Activated naive CD4-positive, alpha-beta T cell treated with anti-CD3 and anti-CD28 coated beads for 36 hours (primary cell): ENCODE measurements at regions of chr14 and their contacts with region 1.

Region 1: GRCh38 chr14:53152890-53153701 is at the start of gene DDHD1:
- DNase-seq: peak; percentile 82
- H3K4me3 Mint-ChIP-seq: peak within 1 kb of the TSS; percentile 100
- H3K27ac Mint-ChIP-seq: peak within 1 kb of the TSS; percentile 95
- H3K4me1 Mint-ChIP-seq: peaks cover 36% of the 10 kb centered on the region
- H3K27me3 Mint-ChIP-seq: no peaks in the 10 kb centered on the region
- total RNA-seq, gene DDHD1: 20.1 to 20.4 TPM

Region 2: DNA sequence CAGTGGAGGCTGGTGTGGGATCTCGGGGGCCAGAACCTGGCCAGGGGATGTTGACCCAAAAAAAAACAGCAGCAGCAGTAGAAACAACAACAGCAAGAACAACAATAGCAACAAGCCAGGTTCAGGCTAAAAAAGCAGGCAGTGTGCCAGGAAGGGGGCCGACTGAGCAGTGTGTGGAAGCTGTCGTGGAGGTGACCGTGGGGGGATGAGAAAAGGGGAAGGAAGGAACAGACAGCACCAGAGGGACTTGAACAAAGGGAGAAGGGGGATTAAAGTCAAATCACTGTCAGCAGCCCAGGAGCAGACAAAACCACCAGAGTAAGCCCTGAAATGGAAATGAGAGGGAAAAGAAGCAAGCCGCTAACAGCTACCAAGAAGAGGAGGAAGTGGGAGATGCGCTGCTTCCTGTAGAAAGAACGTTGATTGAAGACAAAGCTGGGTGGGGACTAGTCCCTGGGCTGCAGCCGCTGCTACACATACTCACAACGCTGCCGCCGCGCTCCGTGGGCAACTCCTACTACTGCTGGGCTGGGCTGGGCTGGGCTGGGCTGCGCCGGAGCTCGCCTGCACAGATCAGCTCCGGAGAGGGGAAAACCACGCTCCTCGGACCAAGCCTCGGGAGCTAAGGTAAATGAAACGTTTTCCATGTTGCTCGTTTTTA is 1292.8 kb before region 1 on chr14 and contains the start of gene GNG2:
- CTCF ChIA-PET with region 1: no interaction called
- intact Hi-C with region 1: loop called (anchors 5 kb)
- DNase-seq: peak; percentile 91
- H3K4me3 Mint-ChIP-seq: peak within 1 kb of the TSS; percentile 96
- H3K27ac Mint-ChIP-seq: peak within 1 kb of the TSS; percentile 94
- H3K4me1 Mint-ChIP-seq: peaks cover 51% of the 10 kb centered on the region
- H3K27me3 Mint-ChIP-seq: no peaks in the 10 kb centered on the region
- total RNA-seq, gene GNG2: 176 to 181 TPM

Region 3: GRCh38 chr14:52259434-52259833 is 893.7 kb before region 1 on chr14:
- CTCF ChIA-PET with region 1: no interaction called
- intact Hi-C with region 1: no loop called
- DNase-seq: no peak
- H3K4me3 Mint-ChIP-seq: no peak overlapping the region
- H3K27ac Mint-ChIP-seq: no peak overlapping the region
- H3K4me1 Mint-ChIP-seq: peaks cover 1% of the 10 kb centered on the region
- H3K27me3 Mint-ChIP-seq: peaks cover 2% of the 10 kb centered on the region

Region 4: DNA sequence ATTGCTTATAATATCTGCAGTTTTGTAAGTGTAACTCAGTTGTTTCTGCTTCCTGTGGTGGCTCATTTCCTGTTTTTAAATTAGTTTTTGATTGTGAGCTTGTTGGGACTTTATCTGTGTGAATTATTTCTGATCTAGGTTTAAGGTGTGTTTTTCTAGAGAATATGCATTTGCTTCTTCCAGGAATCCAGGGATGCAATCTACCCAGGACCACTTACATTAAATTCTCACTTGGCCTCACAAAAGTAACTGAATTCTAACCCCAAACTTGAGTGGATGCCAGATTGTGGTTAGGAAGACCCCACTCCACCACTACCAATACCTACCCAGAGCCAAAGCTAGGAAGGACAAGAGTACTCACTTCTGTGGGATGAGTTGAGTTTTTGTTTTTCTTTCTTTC is 411.2 kb before region 1 on chr14:
- CTCF ChIA-PET with region 1: no interaction called
- intact Hi-C with region 1: loop called (anchors 1 kb)
- DNase-seq: no peak
- H3K4me3 Mint-ChIP-seq: peak overlapping the region; percentile 68
- H3K27ac Mint-ChIP-seq: peak overlapping the region; percentile 95
- H3K4me1 Mint-ChIP-seq: peaks cover 63% of the 10 kb centered on the region
- H3K27me3 Mint-ChIP-seq: no peaks in the 10 kb centered on the region

Region 5: GRCh38 chr14:53109105-53110041 is 43.7 kb before region 1 on chr14:
- CTCF ChIA-PET with region 1: interaction called, 8 read pairs
- intact Hi-C with region 1: loop called (anchors 1 kb)
- DNase-seq: peak; percentile 76
- H3K4me3 Mint-ChIP-seq: no peak overlapping the region
- H3K27ac Mint-ChIP-seq: no peak overlapping the region
- H3K4me1 Mint-ChIP-seq: peaks cover 20% of the 10 kb centered on the region
- H3K27me3 Mint-ChIP-seq: no peaks in the 10 kb centered on the region

Region 6: DNA sequence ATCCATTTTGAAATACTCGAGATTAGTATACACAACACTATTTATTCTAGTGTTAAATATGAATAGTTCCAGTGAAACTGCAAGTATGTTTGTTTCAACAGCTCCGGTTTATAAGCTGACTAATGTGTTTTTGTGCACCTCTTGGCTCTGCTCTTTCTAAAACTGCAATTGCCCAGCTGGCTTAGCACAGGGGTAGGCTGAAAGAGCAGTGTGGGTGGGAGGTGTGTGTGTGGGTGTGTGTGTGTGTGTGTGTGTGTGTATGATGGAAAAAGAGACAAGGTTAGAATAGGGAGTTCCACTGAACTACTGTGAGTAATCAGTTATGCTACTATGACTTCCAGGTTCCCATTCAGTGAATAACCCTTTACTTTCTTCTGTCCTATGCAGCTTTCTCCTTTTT is 37.8 kb after region 1 on chr14:
- CTCF ChIA-PET with region 1: interaction called, 3 read pairs
- intact Hi-C with region 1: loop called (anchors 1 kb)
- DNase-seq: peak; percentile 72
- H3K4me3 Mint-ChIP-seq: peak overlapping the region; percentile 41
- H3K27ac Mint-ChIP-seq: peak overlapping the region; percentile 22
- H3K4me1 Mint-ChIP-seq: peaks cover 12% of the 10 kb centered on the region
- H3K27me3 Mint-ChIP-seq: no peaks in the 10 kb centered on the region

Region 7: GRCh38 chr14:54509546-54510501 is 1356.7 kb after region 1 on chr14 and contains the start of gene CGRRF1:
- CTCF ChIA-PET with region 1: no interaction called
- intact Hi-C with region 1: loop called (anchors 5 kb)
- DNase-seq: peak; percentile 98
- H3K4me3 Mint-ChIP-seq: peak within 1 kb of the TSS; percentile 86
- H3K27ac Mint-ChIP-seq: peak within 1 kb of the TSS; percentile 52
- H3K4me1 Mint-ChIP-seq: peaks cover 41% of the 10 kb centered on the region
- H3K27me3 Mint-ChIP-seq: no peaks in the 10 kb centered on the region
- total RNA-seq, gene CGRRF1: 9.2 to 9.7 TPM